Heart right ventricle (tissue), 16 donors: ENCODE measurements at regions of chr5 and their contacts with region 1.

Region 1: GRCh38 chr5:31664566-31664965 is 25.6 kb downstream of the PDZD2 start:
- DNase-seq: no peak
- ATAC-seq: no peak
- H3K4me3 ChIP-seq: no peak overlapping the region
- H3K27ac ChIP-seq: no peak overlapping the region
- H3K4me1 ChIP-seq: peaks cover 0 to 44% (median 17%) of the 10 kb centered on the region in 9 donors
- H3K27me3 ChIP-seq: no peaks in the 10 kb centered on the region
- CTCF ChIP-seq: peak in 2 of 9 donors; percentile 16 to 21

Region 2: DNA sequence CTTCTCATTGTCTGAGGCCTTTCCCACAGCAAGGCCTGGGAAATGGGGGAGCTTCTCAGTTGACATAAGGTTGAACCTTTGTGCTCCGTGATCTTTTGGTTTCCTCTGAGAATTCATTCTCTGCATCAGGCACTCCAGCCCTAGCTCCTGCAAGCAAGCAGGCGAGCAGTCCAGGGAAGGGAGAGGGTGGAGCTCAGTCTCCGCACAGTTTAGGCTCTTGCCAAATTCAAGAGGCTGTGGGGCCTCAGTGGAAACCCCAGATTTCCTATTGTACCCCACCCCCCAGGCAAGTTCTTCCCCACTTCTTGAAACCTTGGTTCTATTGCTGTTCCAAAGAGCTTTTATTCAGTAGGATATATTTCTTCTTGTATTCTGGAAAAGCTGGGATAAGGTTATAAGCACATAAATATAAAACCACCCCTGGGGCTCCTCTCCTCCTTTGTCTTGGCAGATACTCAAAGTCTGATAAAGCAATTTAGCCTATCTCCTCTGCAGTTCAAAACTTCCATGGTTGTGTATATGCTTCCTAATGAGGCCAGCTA is 121.6 kb after region 1 on chr5:
- intact Hi-C with region 1: loop called in 1 of 10 experiments (anchors 5 kb)
- DNase-seq: peak; percentile 25 to 52
- ATAC-seq: peak; percentile 76 to 89 (median 82)
- H3K4me3 ChIP-seq: no peak overlapping the region
- H3K27ac ChIP-seq: peak overlapping the region in 9 of 10 donors; percentile 17 to 77 (median 42)
- H3K4me1 ChIP-seq: peaks cover 5 to 59% (median 23%) of the 10 kb centered on the region in 9 donors
- H3K27me3 ChIP-seq: no peaks in the 10 kb centered on the region
- CTCF ChIP-seq: no peak

Region 3: GRCh38 chr5:31809050-31809870 is 144.7 kb after region 1 on chr5:
- intact Hi-C with region 1: loop called in 1 of 10 experiments (anchors 10 kb)
- DNase-seq: peak; percentile 65 to 75
- ATAC-seq: peak; percentile 80 to 95 (median 91)
- H3K4me3 ChIP-seq: no peak overlapping the region
- H3K27ac ChIP-seq: no peak overlapping the region
- H3K4me1 ChIP-seq: peaks cover 0 to 27% (median 8%) of the 10 kb centered on the region in 9 donors
- H3K27me3 ChIP-seq: no peaks in the 10 kb centered on the region
- CTCF ChIP-seq: peak; percentile 65 to 90 (median 82)